ENCODE measurements at regions of chr20 and their contacts with region 1.

Region 1: DNA sequence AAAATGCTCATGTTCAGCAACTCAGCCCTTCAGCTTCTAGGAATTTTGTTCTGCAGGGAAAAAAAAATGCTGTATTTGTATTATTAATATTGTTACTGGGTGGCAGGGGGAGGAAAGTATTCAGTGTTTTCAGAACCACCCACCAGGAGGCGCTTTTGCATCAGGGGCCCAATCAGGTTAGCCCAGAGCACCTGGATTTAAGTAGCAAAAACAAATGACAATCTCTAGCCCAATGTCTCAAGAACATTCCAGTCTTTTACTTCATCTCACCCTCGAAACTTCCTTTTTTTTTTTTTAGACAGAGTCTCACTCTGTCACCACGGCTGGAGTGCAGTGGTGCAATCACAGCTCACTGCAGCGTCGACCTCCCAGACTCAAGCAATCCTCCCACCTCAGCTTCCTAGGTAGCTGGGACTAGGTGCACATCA is 635 bp upstream of the C20orf203 start:
- DNase-seq: no peak
- ATAC-seq: peak in 2 of 4 donors; percentile 25 to 29
- H3K4me3 ChIP-seq: no peak overlapping the region
- H3K27ac ChIP-seq: no peak overlapping the region
- H3K4me1 ChIP-seq: peaks cover 0 to 29% (median 0%) of the 10 kb centered on the region in 12 donors
- H3K27me3 ChIP-seq: no peaks in the 10 kb centered on the region
- CTCF ChIP-seq: peak; percentile 53 to 75 (median 63)
- POLR2A ChIP-seq: no peak

Region 2: DNA sequence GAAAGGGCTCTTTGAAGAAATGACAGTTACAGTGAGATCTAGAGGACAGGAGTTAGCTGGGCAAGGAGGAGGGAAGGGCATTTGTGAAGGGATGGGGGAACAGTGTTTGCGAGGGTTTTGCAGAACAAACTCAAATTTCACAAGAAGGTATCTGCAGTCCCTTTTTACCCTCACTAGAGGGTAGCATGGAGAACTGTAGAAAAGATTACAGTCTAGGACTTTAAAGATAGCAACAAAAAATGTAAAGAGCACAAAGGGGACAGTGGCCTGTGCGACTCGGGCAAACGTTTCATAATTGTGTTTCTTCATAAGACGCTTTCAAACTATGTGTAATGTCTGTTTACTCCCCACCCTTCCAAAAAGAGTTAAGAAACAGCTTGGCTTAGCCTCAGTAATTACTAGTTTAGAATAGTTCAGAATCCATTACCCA is 337.4 kb before region 1 on chr20:
- intact Hi-C with region 1: no loop called
- DNase-seq: no peak
- ATAC-seq: no peak
- H3K4me3 ChIP-seq: no peak overlapping the region
- H3K27ac ChIP-seq: no peak overlapping the region
- H3K4me1 ChIP-seq: peaks cover 4 to 46% (median 28%) of the 10 kb centered on the region in 12 donors
- H3K27me3 ChIP-seq: no peaks in the 10 kb centered on the region
- CTCF ChIP-seq: peak; percentile 30 to 67 (median 49)
- POLR2A ChIP-seq: no peak

Region 3: DNA sequence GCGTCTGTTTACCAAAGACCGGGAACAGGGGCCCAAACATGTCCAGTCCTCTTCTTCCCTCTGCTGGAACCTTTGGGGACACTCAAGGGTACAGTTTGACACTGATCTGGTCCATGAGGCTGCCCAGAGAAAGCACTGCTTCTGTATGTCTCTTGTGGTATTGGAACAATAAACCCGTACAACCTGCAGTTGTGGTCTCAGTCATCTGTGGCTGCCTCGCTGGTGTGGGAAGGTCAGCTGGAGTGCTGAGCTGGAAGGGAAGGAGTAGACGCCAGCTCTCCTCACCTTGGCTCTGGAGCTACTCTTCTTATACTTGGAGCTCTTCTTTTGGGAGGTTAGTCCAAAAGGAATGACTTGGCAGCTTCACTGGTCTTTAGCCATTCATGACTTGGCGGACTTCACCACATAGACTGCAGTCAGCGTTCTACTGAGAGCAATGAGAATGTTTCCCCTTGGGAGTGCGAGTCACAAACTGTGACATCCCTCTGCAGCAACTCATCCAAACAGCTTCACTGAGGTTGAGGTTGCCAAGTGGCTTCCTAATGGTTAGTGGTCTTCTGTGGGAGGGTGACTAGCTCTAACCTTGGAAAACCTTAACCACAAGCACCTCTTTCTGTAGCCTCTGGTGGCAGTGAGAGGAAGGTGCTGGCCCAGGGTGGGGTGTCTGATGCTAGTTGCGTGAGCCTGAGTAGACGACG is 235.1 kb before region 1 on chr20:
- intact Hi-C with region 1: no loop called
- DNase-seq: no peak
- ATAC-seq: no peak
- H3K4me3 ChIP-seq: no peak overlapping the region
- H3K27ac ChIP-seq: no peak overlapping the region
- H3K4me1 ChIP-seq: peaks cover 0 to 4% (median 0%) of the 10 kb centered on the region in 12 donors
- H3K27me3 ChIP-seq: no peaks in the 10 kb centered on the region
- CTCF ChIP-seq: no peak
- POLR2A ChIP-seq: no peak

Region 4: DNA sequence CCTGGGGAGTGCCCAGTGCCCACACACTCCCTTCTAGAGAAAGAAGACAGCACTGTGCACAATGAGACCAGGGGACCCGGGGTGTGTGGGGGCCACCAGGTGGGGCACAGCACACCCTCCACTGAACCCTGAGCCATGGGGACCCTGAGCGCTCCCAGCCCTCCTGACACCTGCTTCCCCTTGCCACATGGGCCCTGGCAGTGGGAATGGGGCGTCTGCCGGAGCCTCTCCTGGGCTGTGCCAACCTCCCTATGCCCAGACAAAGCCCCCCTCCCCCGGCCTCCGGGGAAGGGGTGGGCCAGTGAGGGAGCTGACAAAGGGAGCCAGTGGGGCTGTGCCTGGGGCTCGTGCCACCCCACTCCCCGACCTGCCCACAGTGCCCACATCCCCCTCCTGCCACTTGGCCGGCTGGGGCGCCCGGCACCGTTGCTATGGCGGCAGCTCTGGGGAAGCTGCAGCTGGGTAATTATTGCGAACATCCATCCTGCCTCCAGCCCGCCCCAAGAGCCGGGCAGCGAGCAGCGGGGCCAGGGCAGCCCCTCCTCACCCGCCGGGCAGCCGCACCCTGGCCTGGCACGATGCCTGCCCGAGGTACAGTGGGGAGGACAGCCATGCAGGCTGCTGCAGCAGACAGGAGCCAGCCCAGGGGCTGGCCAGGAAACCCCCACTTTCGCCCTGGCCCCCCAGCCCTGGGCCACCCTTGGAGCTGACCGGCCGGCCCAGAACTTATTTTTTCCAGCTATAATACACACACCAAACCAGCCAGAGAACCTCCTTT is 47.3 kb before region 1 on chr20:
- intact Hi-C with region 1: no loop called
- DNase-seq: no peak
- ATAC-seq: peak in 3 of 4 donors; percentile 32 to 59 (median 53)
- H3K4me3 ChIP-seq: peak overlapping the region in 8 of 12 donors; percentile 2 to 31 (median 21)
- H3K27ac ChIP-seq: peak overlapping the region in 7 of 12 donors; percentile 30 to 76 (median 57)
- H3K4me1 ChIP-seq: peaks cover 0 to 15% (median 12%) of the 10 kb centered on the region in 12 donors
- H3K27me3 ChIP-seq: peaks cover 0 to 16% (median 0%) of the 10 kb centered on the region in 9 donors
- CTCF ChIP-seq: no peak
- POLR2A ChIP-seq: no peak

Region 5: GRCh38 chr20:32762149-32762753 is 87.9 kb after region 1 on chr20 and contains the start of gene DNMT3B:
- intact Hi-C with region 1: loop called in 3 of 10 experiments (anchors 5 kb)
- DNase-seq: peak; percentile 79 to 90 (median 84)
- ATAC-seq: peak; percentile 27 to 95 (median 92)
- H3K4me3 ChIP-seq: peak within 1 kb of the TSS; percentile 59 to 99 (median 84)
- H3K27ac ChIP-seq: peak within 1 kb of the TSS in 3 of 12 donors; percentile 45 to 67 (median 55)
- H3K4me1 ChIP-seq: peaks cover 0 to 26% (median 13%) of the 10 kb centered on the region in 12 donors
- H3K27me3 ChIP-seq: no peaks in the 10 kb centered on the region
- CTCF ChIP-seq: peak in 7 of 12 donors; percentile 9 to 49 (median 29)
- POLR2A ChIP-seq: peak in 1 of 2 donors; percentile 23
- total RNA-seq, gene DNMT3B: 0.19 to 1.2 (median 0.50) TPM

Region 6: GRCh38 chr20:32779500-32780211 is 105.3 kb after region 1 on chr20:
- intact Hi-C with region 1: loop called (anchors 1 to 5 kb)
- DNase-seq: no peak
- ATAC-seq: no peak
- H3K4me3 ChIP-seq: no peak overlapping the region
- H3K27ac ChIP-seq: no peak overlapping the region
- H3K4me1 ChIP-seq: peaks cover 0 to 12% (median 0%) of the 10 kb centered on the region in 12 donors
- H3K27me3 ChIP-seq: no peaks in the 10 kb centered on the region
- CTCF ChIP-seq: no peak
- POLR2A ChIP-seq: no peak